MCF 10A (cell line): ENCODE measurements at regions of chr2 and their contacts with region 1.

Region 1: DNA sequence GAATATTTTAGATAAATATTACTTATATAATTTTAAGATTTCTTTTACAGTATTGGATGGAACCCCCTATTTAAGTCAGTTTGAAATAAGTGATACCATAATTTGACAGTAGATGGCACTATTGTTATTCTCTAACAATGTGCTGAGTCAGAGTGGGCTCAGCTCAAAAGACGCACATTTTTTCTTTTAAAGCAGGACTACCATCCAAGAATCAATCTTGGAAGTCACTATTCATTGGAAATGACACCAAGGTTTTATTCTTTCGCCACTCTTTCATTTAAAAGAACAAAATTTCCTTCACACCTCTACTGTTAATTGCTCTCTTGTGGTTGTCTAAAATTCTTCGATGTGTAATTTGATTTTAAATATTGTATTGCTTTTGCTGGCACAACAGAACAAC is 32.6 kb upstream of the SPAG16 start:
- DNase-seq: peak; percentile 66
- H3K4me3 Mint-ChIP-seq: no peak overlapping the region
- H3K27ac Mint-ChIP-seq: no peak overlapping the region
- H3K4me1 Mint-ChIP-seq: peaks cover 6% of the 10 kb centered on the region
- H3K27me3 Mint-ChIP-seq: no peaks in the 10 kb centered on the region
- CTCF ChIP-seq: peak; percentile 71

Region 2: GRCh38 chr2:212686285-212686895 is 565.2 kb before region 1 on chr2:
- CTCF ChIA-PET with region 1: no interaction called
- POLR2A ChIA-PET with region 1: no interaction called
- intact Hi-C with region 1: loop called (anchors 2 kb)
- DNase-seq: peak; percentile 75
- H3K4me3 Mint-ChIP-seq: no peak overlapping the region
- H3K27ac Mint-ChIP-seq: no peak overlapping the region
- H3K4me1 Mint-ChIP-seq: peaks cover 6% of the 10 kb centered on the region
- H3K27me3 Mint-ChIP-seq: no peaks in the 10 kb centered on the region
- CTCF ChIP-seq: peak; percentile 91

Region 3: DNA sequence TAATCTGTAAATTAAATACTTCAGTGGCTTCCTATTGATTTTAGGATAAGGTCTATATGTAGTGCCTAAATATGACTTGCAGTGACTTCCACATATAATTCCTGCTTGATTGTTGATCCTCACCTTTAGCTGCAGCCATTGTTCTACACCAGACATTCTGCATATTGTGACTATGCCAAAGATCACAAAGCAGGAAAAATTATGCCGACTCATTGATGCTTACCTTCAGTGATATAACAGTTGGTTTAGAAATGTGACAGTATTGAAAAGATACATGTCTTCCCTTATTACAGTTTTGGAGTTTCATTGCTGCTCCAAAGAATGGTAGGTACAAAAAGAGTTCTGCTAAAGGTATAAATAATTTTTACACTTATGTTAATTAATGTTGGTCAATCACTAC is 20.3 kb after region 1 on chr2:
- CTCF ChIA-PET with region 1: no interaction called
- POLR2A ChIA-PET with region 1: no interaction called
- intact Hi-C with region 1: no loop called
- DNase-seq: no peak
- H3K4me3 Mint-ChIP-seq: no peak overlapping the region
- H3K27ac Mint-ChIP-seq: no peak overlapping the region
- H3K4me1 Mint-ChIP-seq: no peaks in the 10 kb centered on the region
- H3K27me3 Mint-ChIP-seq: no peaks in the 10 kb centered on the region
- CTCF ChIP-seq: no peak

Region 4: DNA sequence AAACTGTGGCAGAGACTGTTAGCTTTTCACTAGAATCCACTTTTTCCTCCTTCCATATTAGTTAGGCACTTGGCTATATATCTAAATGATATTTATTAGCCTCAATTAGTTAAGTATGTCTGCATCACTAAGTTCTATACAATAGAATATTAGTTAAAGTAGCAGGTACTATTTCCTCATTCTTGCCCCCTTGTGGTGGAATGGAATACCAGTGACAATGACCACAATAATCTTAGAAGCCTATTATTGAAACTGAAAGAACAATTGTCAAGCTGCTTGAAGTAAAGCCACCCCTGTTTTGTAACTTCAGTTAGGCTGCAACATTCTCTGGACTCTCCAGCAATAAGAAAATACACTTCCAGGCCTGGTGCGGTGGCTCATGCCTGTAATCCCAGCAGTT is 682.9 kb after region 1 on chr2:
- CTCF ChIA-PET with region 1: no interaction called
- POLR2A ChIA-PET with region 1: no interaction called
- intact Hi-C with region 1: loop called (anchors 10 kb)
- DNase-seq: peak; percentile 42
- H3K4me3 Mint-ChIP-seq: no peak overlapping the region
- H3K27ac Mint-ChIP-seq: no peak overlapping the region
- H3K4me1 Mint-ChIP-seq: peaks cover under 1% of the 10 kb centered on the region
- H3K27me3 Mint-ChIP-seq: no peaks in the 10 kb centered on the region
- CTCF ChIP-seq: peak; percentile 26

Region 5: GRCh38 chr2:214310319-214310718 is 1058.7 kb after region 1 on chr2:
- CTCF ChIA-PET with region 1: interaction called, 3 read pairs
- POLR2A ChIA-PET with region 1: no interaction called
- intact Hi-C with region 1: loop called (anchors 5 kb)
- DNase-seq: peak; percentile 32
- H3K4me3 Mint-ChIP-seq: no peak overlapping the region
- H3K27ac Mint-ChIP-seq: no peak overlapping the region
- H3K4me1 Mint-ChIP-seq: peaks cover 14% of the 10 kb centered on the region
- H3K27me3 Mint-ChIP-seq: no peaks in the 10 kb centered on the region
- CTCF ChIP-seq: peak; percentile 20

Region 6: GRCh38 chr2:214593727-214594126 is 1342.1 kb after region 1 on chr2:
- CTCF ChIA-PET with region 1: interaction called, 3 read pairs
- POLR2A ChIA-PET with region 1: no interaction called
- intact Hi-C with region 1: loop called (anchors 5 kb)
- DNase-seq: no peak
- H3K4me3 Mint-ChIP-seq: no peak overlapping the region
- H3K27ac Mint-ChIP-seq: no peak overlapping the region
- H3K4me1 Mint-ChIP-seq: no peaks in the 10 kb centered on the region
- H3K27me3 Mint-ChIP-seq: no peaks in the 10 kb centered on the region
- CTCF ChIP-seq: no peak

Region 7: DNA sequence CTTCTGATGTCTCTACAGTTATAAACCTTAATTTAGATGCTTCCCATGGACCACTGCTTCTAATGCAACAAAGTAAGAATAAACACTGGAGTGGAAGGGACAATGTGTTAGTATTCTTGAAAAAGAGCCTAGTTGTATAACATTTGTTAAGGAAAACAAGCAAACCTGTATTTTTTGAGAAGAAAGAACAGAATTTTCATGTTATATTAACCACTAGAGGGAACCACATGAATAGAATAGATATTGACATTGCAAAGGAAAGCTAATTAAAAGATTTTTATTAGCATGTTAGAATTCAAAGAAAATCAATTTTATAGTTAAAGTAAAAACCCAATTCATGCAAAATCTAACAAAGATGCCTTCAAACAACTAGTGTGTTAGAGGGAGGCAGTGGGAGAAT is 1709.1 kb after region 1 on chr2:
- CTCF ChIA-PET with region 1: interaction called, 3 read pairs
- POLR2A ChIA-PET with region 1: no interaction called
- intact Hi-C with region 1: loop called (anchors 10 kb)
- DNase-seq: peak; percentile 13
- H3K4me3 Mint-ChIP-seq: no peak overlapping the region
- H3K27ac Mint-ChIP-seq: no peak overlapping the region
- H3K4me1 Mint-ChIP-seq: no peaks in the 10 kb centered on the region
- H3K27me3 Mint-ChIP-seq: no peaks in the 10 kb centered on the region
- CTCF ChIP-seq: peak; percentile 24